Left cardiac atrium (tissue), 4 donors: ENCODE measurements at regions of chr6 and their contacts with region 1.

Region 1: DNA sequence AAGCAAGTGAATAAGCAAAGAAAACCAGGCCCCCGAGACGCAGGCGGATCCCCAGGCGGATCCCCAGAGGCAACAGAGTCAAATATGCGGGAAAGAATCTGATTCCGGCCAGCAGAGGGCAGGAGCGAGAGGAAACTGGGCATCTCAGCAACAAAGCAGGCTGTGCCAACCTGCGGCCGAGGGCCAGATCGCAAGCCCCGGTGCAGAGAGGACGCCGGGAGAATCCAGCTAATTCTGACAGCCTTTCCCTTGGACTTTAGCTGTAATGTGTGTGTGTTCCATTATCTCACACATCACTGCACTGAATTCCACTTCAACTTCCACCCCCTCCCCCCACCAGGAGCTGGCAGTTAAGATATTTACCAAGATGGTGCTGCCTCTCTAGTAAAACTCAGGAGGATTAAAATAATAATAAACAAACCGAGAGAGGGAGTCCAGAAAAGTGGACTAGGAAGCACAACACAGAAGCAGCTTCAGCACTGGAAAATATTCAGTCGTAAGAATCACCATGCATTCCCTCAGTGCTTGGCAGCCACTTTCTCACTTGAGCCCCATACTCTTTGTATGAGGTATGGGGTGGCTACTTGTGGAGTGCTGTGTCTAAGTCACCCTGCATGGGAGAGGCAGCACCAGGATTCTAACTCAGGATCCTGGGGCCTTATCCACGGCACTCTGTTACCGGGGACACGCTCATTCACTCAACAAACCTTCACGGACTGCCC is 66.2 kb upstream of the SNX9 start:
- DNase-seq: peak; percentile 91
- ATAC-seq: peak; percentile 87 to 95

Region 2: GRCh38 chr6:157823001-157823527 is 66.2 kb after region 1 on chr6 and contains the start of gene SNX9:
- intact Hi-C with region 1: loop called in 1 of 2 experiments (anchors 5 kb)
- DNase-seq: peak; percentile 87
- ATAC-seq: peak; percentile 91 to 92
- total RNA-seq, gene SNX9: 37.7 to 39.9 TPM

Region 3: DNA sequence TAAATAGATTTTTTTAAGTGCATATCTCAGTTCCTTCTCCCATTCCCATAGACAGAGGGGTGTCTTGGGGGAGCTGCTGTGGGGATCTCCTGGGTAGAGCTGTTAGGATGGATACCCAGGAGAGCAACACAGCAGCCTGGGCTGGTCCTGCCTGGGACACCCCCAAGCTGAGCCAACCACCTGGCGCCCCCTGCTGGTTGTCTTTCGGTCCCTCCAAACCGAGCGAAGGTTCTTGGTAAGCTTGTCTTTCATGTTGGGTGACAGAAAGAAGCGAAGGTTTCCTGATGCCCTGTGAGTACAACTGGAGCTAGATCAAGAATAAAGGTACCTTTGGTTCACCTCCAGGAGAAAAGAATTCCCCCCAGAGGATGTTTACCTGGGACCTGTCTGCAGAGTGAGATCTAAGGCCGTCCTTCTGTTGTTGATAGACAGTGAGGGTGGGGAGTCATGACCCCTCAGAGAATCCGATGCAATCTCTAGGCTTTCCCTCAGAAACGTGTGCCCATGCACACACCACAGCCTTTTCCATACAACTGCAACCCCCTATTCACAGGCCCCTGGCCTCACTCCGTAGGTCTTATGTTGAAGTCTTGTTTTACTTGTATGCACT is 117.0 kb after region 1 on chr6:
- intact Hi-C with region 1: loop called in 1 of 2 experiments (anchors 2 kb)
- DNase-seq: peak; percentile 82
- ATAC-seq: peak; percentile 68 to 76